Heart left ventricle (tissue), 16 donors: ENCODE measurements at regions of chrX and their contacts with region 1.

Region 1: GRCh38 chrX:104195489-104196084 is 29.3 kb downstream of the FAM199X start:
- DNase-seq: no peak
- ATAC-seq: no peak
- H3K4me3 ChIP-seq: no peak overlapping the region
- H3K27ac ChIP-seq: no peak overlapping the region
- H3K4me1 ChIP-seq: no peaks in the 10 kb centered on the region
- H3K27me3 ChIP-seq: peaks cover 0 to 16% (median 0%) of the 10 kb centered on the region in 9 donors
- CTCF ChIP-seq: peak; percentile 49 to 87 (median 64)
- POLR2A ChIP-seq: no peak

Region 2: DNA sequence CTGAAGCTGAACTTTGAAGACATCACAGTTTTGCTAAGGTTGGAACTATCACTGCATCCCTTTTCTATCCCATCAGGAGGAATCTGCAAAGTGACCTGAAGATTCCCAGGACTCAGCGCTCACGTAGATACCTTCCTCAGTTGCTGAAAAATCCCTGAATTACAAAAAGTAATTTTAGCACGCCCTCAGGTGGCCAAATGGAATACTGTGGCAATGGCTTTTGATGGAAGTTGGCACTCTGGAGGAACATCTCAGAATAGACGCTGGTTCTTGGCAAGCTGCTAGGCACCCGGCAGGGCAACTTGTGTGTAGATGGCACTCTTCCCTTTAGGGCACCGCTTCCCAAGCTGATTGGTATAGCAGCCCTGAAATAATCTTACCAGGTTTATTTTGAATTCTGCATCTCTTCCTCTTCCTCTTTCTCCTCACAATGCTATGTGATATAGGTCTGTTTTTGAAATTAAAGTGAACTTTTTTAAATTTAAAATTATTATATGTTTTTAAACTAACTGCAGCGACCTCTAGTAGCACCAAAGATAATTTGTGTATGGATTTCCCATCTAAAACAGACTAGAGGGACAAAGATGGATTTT is 75.4 kb after region 1 on chrX:
- intact Hi-C with region 1: loop called in 2 of 10 experiments (anchors 2 to 10 kb)
- DNase-seq: peak in 4 of 5 donors; percentile 15 to 61 (median 44)
- ATAC-seq: peak; percentile 64 to 86 (median 82)
- H3K4me3 ChIP-seq: peak overlapping the region in 7 of 12 donors; percentile 20 to 42 (median 26)
- H3K27ac ChIP-seq: no peak overlapping the region
- H3K4me1 ChIP-seq: no peaks in the 10 kb centered on the region
- H3K27me3 ChIP-seq: peaks cover 0 to 37% (median 0%) of the 10 kb centered on the region in 9 donors
- CTCF ChIP-seq: peak; percentile 35 to 64 (median 52)
- POLR2A ChIP-seq: no peak

Region 3: DNA sequence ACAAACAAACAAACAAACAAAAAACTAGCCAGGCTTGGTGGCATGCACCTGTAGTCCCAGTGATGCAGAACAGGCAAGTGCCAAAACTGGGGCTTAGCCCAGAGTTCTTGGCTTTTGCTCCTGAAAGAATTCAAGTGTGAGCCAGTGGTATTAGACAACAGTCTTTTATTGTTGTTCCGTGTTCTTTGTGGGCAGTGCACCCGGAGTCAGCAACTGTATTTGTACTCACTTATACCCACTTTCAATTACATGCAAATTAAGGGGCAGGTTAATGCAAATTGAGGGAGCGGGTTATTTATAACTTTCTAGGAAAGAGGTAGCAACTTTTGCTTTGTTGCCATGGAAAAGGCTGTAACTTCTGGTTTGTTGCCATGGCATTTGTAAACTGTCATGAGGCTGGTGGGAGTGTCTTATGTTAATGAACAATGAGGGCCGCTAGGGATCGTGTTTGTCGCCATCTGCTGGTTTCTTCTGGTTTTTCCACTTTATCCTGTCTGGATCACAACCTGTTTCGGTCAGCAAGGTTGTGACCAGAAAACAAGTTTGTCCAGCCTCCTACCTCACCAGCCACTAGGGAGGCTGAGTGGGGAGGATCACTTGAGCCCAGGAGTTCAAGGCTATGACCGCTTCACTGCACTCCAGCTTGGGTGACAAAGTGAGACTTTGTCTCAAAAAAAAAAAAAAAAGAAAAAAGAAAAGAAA is 148.0 kb after region 1 on chrX:
- intact Hi-C with region 1: loop called in 4 of 10 experiments (anchors 5 to 10 kb)
- DNase-seq: peak in 2 of 5 donors; percentile 10 to 15
- ATAC-seq: peak in 1 of 4 donors; percentile 31
- H3K4me3 ChIP-seq: no peak overlapping the region
- H3K27ac ChIP-seq: no peak overlapping the region
- H3K4me1 ChIP-seq: no peaks in the 10 kb centered on the region
- H3K27me3 ChIP-seq: peaks cover 0 to 22% (median 0%) of the 10 kb centered on the region in 9 donors
- CTCF ChIP-seq: peak in 10 of 12 donors; percentile 15 to 55 (median 38)
- POLR2A ChIP-seq: no peak